Activated T-helper 2 cell treated with anti-CD3 and anti-CD28 coated beads, Interferon-gamma antibody, Interleukin-2, Interleukin-4, amounts not matched to agents 10 μg/mL and 5 μg/mL and 100 μg/mL, durations not matched to agents 14 hours and 24 hours and 36 hours (primary cell): ENCODE measurements at regions of chr18 and their contacts with region 1.

Region 1: GRCh38 chr18:57881818-57882413 is 78.8 kb upstream of the ATP8B1 start:
- DNase-seq: peak; percentile 10
- H3K4me3 Mint-ChIP-seq: no peak overlapping the region
- H3K27ac Mint-ChIP-seq: no peak overlapping the region
- H3K4me1 Mint-ChIP-seq: no peaks in the 10 kb centered on the region
- H3K27me3 Mint-ChIP-seq: peaks cover 2% of the 10 kb centered on the region

Region 2: GRCh38 chr18:57832730-57833442 is 49.0 kb before region 1 on chr18:
- intact Hi-C with region 1: no loop called
- DNase-seq: no peak
- H3K4me3 Mint-ChIP-seq: no peak overlapping the region
- H3K27ac Mint-ChIP-seq: no peak overlapping the region
- H3K4me1 Mint-ChIP-seq: peaks cover 15% of the 10 kb centered on the region
- H3K27me3 Mint-ChIP-seq: peaks cover 19% of the 10 kb centered on the region

Region 3: DNA sequence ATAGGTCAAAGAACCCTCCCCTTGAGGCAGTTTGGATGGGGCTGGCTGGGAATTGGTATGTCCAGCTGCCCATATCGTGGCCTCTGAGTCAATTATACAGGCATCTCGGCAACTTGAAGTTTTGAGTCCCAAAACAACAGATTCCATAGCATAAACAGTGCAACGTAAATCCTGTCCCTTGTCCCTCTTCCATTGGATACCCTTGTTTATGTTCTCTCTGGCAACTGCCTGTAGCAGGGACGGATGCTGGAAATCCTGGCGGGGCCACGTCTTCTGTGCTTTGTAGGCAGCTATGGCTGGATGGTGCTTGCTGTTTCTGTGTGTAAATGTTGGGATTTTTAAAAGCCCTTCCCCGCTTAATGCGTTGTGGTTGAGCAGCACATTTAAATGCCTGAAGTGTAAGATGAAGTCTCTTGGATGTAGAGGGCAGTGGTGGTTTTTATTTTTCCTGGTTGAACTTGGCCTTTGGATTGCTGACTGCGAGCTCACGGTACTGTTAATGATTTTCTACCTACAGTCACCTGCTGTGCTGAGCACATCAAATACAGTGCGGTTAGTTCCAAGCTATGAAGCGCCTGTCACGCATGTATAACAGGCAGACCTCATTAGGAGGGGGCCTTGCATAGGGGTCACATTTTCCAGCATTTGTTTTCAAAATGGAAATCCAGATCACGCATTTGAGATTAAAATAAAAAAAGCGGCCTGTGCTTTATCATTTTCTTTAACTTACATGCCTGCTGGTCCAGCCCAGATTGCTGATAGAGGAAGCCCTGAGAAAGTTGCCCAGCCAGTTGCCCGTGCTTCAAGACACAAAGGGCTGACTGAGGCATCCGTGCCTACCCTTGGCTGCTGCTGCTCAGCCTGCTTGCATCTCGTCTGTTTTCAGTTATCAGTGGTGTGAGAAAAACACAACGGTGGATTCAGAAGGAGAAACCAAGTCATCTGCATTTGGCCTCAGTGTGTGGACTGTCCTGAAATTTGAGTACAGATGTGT is 246.8 kb after region 1 on chr18:
- intact Hi-C with region 1: loop called (anchors 5 kb)
- DNase-seq: no peak
- H3K4me3 Mint-ChIP-seq: no peak overlapping the region
- H3K27ac Mint-ChIP-seq: no peak overlapping the region
- H3K4me1 Mint-ChIP-seq: no peaks in the 10 kb centered on the region
- H3K27me3 Mint-ChIP-seq: no peaks in the 10 kb centered on the region

Region 4: DNA sequence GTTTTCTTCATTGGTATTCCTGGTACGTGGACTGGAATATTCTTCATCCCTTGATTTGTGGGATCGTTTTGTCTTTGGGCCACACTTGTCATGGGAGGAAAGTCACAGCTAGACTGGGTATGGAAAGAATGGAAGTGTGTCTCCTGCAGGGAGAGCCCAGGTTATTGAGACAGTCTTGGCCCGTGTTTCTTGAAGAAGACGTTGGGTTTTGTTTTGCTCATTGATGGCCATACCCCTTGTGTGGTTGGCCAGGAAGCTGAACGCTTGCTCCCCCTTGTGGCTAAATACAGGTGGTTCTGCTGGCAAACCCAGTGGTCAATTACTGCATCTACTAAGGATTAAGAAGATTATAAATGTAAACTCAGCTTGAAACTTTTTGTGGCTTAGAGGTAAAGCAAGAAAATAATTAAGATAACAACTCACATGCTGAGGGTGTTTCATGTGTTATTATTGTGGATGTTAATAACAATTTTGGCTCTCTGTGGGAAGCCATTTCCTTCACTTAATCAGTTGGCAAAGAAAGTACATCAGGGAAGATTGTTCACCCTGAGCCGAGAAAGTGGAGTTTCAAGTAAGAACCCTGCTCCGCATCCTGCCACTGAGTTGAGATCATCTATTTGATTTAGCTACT is 253.9 kb after region 1 on chr18:
- intact Hi-C with region 1: loop called (anchors 5 kb)
- DNase-seq: peak; percentile 24
- H3K4me3 Mint-ChIP-seq: no peak overlapping the region
- H3K27ac Mint-ChIP-seq: no peak overlapping the region
- H3K4me1 Mint-ChIP-seq: peaks cover 9% of the 10 kb centered on the region
- H3K27me3 Mint-ChIP-seq: peaks cover 11% of the 10 kb centered on the region